GM10248 (cell line): ENCODE measurements at regions of chr2 and their contacts with region 1.

Region 1: GRCh38 chr2:86221066-86221684 is 21.9 kb downstream of the MRPL35 start:
- DNase-seq: peak; percentile 69
- CTCF ChIP-seq: peak; percentile 87

Region 2: GRCh38 chr2:85561317-85561979 is 659.7 kb before region 1 on chr2 and contains the start of gene GGCX:
- CTCF ChIA-PET with region 1: no interaction called
- POLR2A ChIA-PET with region 1: no interaction called
- DNase-seq: peak; percentile 96
- CTCF ChIP-seq: no peak

Region 3: GRCh38 chr2:85988175-85988913 is 232.8 kb before region 1 on chr2:
- CTCF ChIA-PET with region 1: no interaction called
- POLR2A ChIA-PET with region 1: no interaction called
- DNase-seq: no peak
- CTCF ChIP-seq: no peak

Region 4: GRCh38 chr2:86238354-86238753 is 17.2 kb after region 1 on chr2:
- CTCF ChIA-PET with region 1: interaction called, 50 read pairs
- POLR2A ChIA-PET with region 1: interaction called, 6 read pairs
- DNase-seq: peak; percentile 75
- CTCF ChIP-seq: no peak

Region 5: GRCh38 chr2:86249579-86250391 is 28.6 kb after region 1 on chr2:
- CTCF ChIA-PET with region 1: interaction called, 17 read pairs
- POLR2A ChIA-PET with region 1: no interaction called
- DNase-seq: peak; percentile 47
- CTCF ChIP-seq: peak; percentile 44

Region 6: DNA sequence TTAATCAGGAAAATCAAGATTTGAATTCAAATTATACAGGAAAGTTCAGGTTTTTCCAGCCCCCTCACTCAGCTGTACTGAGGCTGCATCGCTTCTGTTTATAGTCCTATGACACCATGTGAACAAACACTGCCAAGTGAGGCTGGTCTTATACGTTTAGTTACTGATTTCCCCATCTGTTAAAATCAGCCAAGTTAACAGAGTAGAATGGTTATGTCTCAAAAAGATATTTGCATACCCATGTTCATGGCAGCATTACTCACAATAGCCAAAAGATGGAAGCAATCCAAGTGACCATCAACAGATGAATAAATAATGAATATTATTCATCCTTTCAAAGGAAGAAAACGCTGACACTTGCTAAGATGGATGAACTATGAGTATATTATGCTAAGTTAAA is 72.4 kb after region 1 on chr2:
- CTCF ChIA-PET with region 1: interaction called, 83 read pairs
- POLR2A ChIA-PET with region 1: no interaction called
- DNase-seq: no peak
- CTCF ChIP-seq: no peak

Region 7: GRCh38 chr2:86314125-86314524 is 93.0 kb after region 1 on chr2:
- CTCF ChIA-PET with region 1: interaction called, 13 read pairs
- POLR2A ChIA-PET with region 1: no interaction called
- DNase-seq: no peak
- CTCF ChIP-seq: no peak

Region 8: GRCh38 chr2:86440631-86441391 is 219.6 kb after region 1 on chr2 and contains the start of gene KDM3A:
- CTCF ChIA-PET with region 1: interaction called, 22 read pairs
- POLR2A ChIA-PET with region 1: no interaction called
- DNase-seq: peak; percentile 94
- CTCF ChIP-seq: no peak